Common myeloid progenitor, CD34-positive (primary cell): ENCODE measurements at regions of chr14 and their contacts with region 1.

Region 1: GRCh38 chr14:68248481-68249255 is 429.1 kb downstream of the RAD51B start:
- DNase-seq: peak; percentile 72 to 85 (median 85)
- H3K4me3 ChIP-seq: no peak overlapping the region
- H3K27ac ChIP-seq: no peak overlapping the region
- H3K4me1 ChIP-seq: peaks cover 23 to 71% (median 33%) of the 10 kb centered on the region in 4 experiments
- H3K27me3 ChIP-seq: no peaks in the 10 kb centered on the region

Region 2: GRCh38 chr14:67943947-67944346 is 304.7 kb before region 1 on chr14:
- CTCF ChIA-PET with region 1: interaction called, 49 read pairs
- POLR2A ChIA-PET with region 1: no interaction called
- DNase-seq: peak; percentile 90 to 94 (median 94)
- H3K4me3 ChIP-seq: no peak overlapping the region
- H3K27ac ChIP-seq: no peak overlapping the region
- H3K4me1 ChIP-seq: peaks cover 6 to 22% (median 7%) of the 10 kb centered on the region in 4 experiments
- H3K27me3 ChIP-seq: no peaks in the 10 kb centered on the region

Region 3: GRCh38 chr14:68216957-68217356 is 31.7 kb before region 1 on chr14:
- CTCF ChIA-PET with region 1: no interaction called
- POLR2A ChIA-PET with region 1: no interaction called
- DNase-seq: no peak
- H3K4me3 ChIP-seq: no peak overlapping the region
- H3K27ac ChIP-seq: no peak overlapping the region
- H3K4me1 ChIP-seq: peaks cover 3 to 10% (median 6%) of the 10 kb centered on the region in 4 experiments
- H3K27me3 ChIP-seq: no peaks in the 10 kb centered on the region

Region 4: DNA sequence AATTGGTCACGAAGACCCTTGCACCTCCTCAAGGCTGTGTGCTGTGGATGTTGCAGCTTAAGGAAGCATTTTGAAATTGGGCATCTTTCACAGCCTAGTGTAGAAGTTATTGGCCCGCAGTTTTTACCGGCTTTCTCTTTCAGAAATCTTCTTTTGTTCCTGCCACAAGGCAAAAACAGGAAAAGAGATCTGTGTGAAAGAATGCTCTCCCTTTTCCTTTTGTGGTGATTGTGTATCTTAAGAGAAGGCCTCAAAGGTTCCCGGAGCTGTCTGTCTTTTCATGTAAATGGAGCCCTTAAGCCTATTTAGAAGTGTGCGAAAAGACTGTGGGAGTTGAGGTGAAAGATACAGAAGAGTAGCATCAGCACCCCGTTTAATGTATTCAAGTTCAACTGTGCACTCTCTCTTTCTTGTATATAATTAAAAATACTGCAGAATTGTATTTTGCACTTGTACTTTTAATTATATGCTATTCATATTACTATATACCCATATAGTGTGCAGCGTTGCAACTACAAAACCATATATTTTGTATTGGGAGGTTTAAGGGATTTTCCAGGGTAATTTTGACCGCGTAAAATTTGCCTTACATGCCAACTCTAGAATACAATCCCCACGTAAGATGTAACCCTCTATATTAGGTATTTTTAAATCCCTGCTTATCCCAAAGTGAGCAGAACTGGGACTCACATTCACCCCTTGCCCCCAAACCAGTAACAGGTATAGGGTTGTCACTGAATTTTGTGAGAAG is 12.6 kb after region 1 on chr14:
- CTCF ChIA-PET with region 1: interaction called, 22 read pairs
- POLR2A ChIA-PET with region 1: interaction called, 3 read pairs
- DNase-seq: no peak
- H3K4me3 ChIP-seq: peak overlapping the region in 2 of 7 experiments; percentile 14 to 34
- H3K27ac ChIP-seq: peak overlapping the region in 1 of 2 experiments; percentile 1
- H3K4me1 ChIP-seq: peaks cover 8 to 25% (median 16%) of the 10 kb centered on the region in 4 experiments
- H3K27me3 ChIP-seq: no peaks in the 10 kb centered on the region

Region 5: DNA sequence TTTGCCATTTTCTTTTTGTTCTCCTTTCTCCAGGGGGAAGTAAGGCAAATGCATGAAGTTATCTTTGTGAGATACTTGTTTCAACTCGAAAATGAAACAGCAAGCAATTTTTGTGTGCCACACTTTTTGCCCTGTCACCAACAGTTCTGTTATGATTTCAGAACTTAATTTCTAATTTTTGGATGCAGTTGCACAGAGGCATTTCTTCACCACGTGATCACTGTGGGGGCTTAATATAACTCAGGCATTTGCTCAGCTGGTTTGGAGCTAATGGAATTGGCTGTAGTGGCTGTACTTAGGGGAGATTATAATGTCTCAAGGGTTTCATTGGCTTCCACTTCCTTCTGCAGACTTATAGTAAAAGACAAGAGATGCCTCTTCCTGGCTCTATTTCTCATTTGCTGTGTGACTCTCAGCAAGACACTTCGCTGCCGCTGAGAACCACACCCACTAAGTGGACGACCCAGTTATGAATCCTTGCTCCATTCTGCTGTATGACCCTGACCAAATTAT is 23.3 kb after region 1 on chr14:
- CTCF ChIA-PET with region 1: interaction called, 11 read pairs
- POLR2A ChIA-PET with region 1: interaction called, 5 read pairs
- DNase-seq: peak in 1 of 3 donors; percentile 59
- H3K4me3 ChIP-seq: no peak overlapping the region
- H3K27ac ChIP-seq: no peak overlapping the region
- H3K4me1 ChIP-seq: peaks cover 13 to 30% (median 23%) of the 10 kb centered on the region in 4 experiments
- H3K27me3 ChIP-seq: no peaks in the 10 kb centered on the region

Region 6: GRCh38 chr14:68788996-68789820 is 540.5 kb after region 1 on chr14:
- CTCF ChIA-PET with region 1: interaction called, 81 read pairs
- POLR2A ChIA-PET with region 1: no interaction called
- DNase-seq: peak; percentile 86 to 89 (median 89)
- H3K4me3 ChIP-seq: peak overlapping the region in 3 of 7 experiments; percentile 8 to 16 (median 14)
- H3K27ac ChIP-seq: no peak overlapping the region
- H3K4me1 ChIP-seq: peaks cover 6 to 68% (median 42%) of the 10 kb centered on the region in 4 experiments
- H3K27me3 ChIP-seq: no peaks in the 10 kb centered on the region

Region 7: GRCh38 chr14:68816262-68816942 is 567.7 kb after region 1 on chr14:
- CTCF ChIA-PET with region 1: interaction called, 88 read pairs
- POLR2A ChIA-PET with region 1: interaction called, 4 read pairs
- DNase-seq: peak; percentile 88 to 94 (median 93)
- H3K4me3 ChIP-seq: peak overlapping the region; percentile 32 to 71 (median 49)
- H3K27ac ChIP-seq: peak overlapping the region; percentile 59 to 82
- H3K4me1 ChIP-seq: peaks cover 9 to 66% (median 59%) of the 10 kb centered on the region in 4 experiments
- H3K27me3 ChIP-seq: no peaks in the 10 kb centered on the region

Region 8: GRCh38 chr14:68843471-68844209 is 595.0 kb after region 1 on chr14:
- CTCF ChIA-PET with region 1: interaction called, 11 read pairs
- POLR2A ChIA-PET with region 1: no interaction called
- DNase-seq: peak; percentile 71 to 77 (median 75)
- H3K4me3 ChIP-seq: peak overlapping the region in 4 of 7 experiments; percentile 17 to 50 (median 37)
- H3K27ac ChIP-seq: no peak overlapping the region
- H3K4me1 ChIP-seq: peaks cover 0 to 17% (median 4%) of the 10 kb centered on the region in 4 experiments
- H3K27me3 ChIP-seq: no peaks in the 10 kb centered on the region